MCF 10A (cell line): ENCODE measurements at regions of chr9 and their contacts with region 1.

Region 1: DNA sequence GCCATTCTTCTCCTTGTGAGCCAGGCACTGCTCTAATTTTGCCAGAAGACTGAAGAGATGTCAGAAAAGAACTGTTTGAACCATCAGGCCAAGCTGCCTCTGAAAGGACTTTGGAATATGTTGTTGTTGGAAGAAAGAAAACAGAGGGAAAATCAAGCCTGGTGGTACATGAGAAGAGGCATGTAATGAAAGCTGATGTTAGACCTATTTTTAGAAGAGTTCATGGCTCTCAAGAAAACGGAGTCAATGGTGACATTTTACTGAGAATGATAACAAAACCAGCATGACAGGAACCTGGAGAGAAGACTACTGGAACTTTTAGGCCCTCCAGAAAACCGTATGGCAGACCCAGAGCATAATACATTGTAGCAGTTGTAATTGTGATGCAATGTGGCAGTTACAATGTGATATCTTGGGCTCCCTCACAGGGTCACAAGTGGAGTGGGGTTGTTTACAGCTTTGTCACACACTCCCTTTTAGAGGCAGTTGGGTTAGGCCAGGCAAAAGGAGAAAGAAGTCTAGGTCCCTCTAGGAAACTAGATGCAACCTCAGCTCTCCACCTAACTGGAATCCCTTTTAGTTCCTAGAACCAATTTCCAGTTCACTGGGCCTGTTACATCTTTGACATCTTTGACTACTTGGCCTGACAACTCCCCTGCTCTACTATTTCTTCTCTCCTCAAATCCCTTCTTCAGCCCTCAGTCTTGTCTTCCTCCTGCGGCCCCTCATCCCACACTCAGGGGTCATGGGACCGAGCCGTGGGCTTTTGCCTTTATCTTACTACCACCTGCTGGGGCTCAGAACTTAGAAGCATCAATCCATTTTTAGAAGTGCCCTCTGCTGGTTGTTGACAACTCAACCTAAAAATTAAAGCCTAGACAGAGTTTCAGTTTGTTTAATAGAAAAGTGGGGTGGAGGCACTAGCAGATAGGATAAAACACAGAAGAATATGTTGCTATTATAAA is 61.2 kb upstream of the JAK2 start:
- DNase-seq: peak; percentile 52
- H3K4me3 Mint-ChIP-seq: no peak overlapping the region
- H3K27ac Mint-ChIP-seq: no peak overlapping the region
- H3K4me1 Mint-ChIP-seq: no peaks in the 10 kb centered on the region
- H3K27me3 Mint-ChIP-seq: peaks cover 11% of the 10 kb centered on the region
- CTCF ChIP-seq: peak; percentile 32

Region 2: GRCh38 chr9:4382722-4383317 is 541.0 kb before region 1 on chr9:
- CTCF ChIA-PET with region 1: no interaction called
- POLR2A ChIA-PET with region 1: no interaction called
- intact Hi-C with region 1: loop called (anchors 5 kb)
- DNase-seq: peak; percentile 53
- H3K4me3 Mint-ChIP-seq: no peak overlapping the region
- H3K27ac Mint-ChIP-seq: no peak overlapping the region
- H3K4me1 Mint-ChIP-seq: no peaks in the 10 kb centered on the region
- H3K27me3 Mint-ChIP-seq: no peaks in the 10 kb centered on the region
- CTCF ChIP-seq: peak; percentile 41

Region 3: DNA sequence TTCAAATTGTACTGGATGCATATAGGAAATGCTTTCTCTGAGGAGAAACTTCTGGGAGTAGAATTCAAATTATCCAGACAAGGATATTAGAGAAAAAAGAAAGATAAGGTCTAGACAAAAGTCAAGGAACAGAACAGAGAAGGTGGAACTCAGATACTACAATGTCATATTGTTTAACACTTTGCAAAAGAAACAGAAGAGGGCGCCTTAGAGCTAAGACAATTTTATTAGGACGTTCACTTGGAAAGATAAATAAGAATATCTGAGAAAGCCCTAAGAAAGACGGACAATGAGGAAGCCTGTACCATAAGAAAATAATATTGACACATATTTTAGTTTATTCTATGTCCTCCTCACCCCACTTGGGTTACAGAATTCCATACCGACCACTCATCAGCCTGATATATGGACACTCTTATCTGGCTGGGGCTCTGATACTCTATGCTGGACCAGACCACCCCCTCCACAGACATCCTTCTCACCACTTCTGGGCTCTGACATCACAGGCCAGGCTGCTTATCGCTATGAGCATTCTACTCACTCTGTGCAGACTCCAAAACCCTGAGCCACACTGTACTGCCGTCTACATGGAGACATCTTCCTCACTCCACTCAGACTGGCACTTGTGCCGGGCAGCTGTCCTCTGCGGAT is 173.7 kb before region 1 on chr9:
- CTCF ChIA-PET with region 1: interaction called, 18 read pairs
- POLR2A ChIA-PET with region 1: no interaction called
- intact Hi-C with region 1: no loop called
- DNase-seq: peak; percentile 64
- H3K4me3 Mint-ChIP-seq: no peak overlapping the region
- H3K27ac Mint-ChIP-seq: no peak overlapping the region
- H3K4me1 Mint-ChIP-seq: peaks cover 7% of the 10 kb centered on the region
- H3K27me3 Mint-ChIP-seq: no peaks in the 10 kb centered on the region
- CTCF ChIP-seq: peak; percentile 38

Region 4: GRCh38 chr9:4849364-4849763 is 74.5 kb before region 1 on chr9:
- CTCF ChIA-PET with region 1: interaction called, 5 read pairs
- POLR2A ChIA-PET with region 1: no interaction called
- intact Hi-C with region 1: loop called (anchors 5 kb)
- DNase-seq: no peak
- H3K4me3 Mint-ChIP-seq: no peak overlapping the region
- H3K27ac Mint-ChIP-seq: no peak overlapping the region
- H3K4me1 Mint-ChIP-seq: peaks cover 18% of the 10 kb centered on the region
- H3K27me3 Mint-ChIP-seq: no peaks in the 10 kb centered on the region
- CTCF ChIP-seq: no peak

Region 5: DNA sequence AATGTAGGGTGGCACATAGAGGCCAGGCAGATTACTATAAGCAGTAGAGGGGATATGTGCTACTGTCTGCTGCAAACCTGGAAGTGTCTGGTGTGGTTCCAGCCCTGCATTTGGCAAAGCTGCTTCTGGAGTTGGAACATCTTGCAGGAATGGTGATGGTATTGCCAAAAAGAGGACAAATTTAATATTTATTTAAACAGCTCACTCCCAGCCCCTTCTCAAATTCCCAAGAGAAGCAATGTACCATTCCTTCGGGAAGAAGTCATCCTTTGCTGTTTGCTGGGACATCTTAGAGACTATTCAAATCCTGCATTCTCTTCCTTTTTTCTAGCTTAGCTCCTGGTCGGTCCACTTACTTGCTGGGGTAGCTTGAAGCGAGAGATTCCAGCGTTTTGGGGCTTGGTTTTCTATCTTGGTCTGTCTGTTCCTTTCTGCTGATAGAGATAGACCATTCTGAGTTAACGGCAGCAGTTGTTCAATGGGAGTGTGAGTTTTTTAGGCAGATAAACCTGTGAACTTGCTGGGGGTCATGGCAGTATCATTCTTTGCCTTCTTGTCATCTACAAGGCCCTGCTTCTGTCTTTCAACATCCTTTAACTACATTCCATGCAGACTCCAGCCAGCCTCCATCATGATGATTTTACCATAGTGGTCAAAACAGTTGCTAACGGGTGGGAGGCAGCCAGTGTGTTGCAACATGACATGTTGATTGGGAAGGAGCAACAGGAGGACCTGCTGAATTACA is 61.2 kb before region 1 on chr9:
- CTCF ChIA-PET with region 1: interaction called, 12 read pairs
- POLR2A ChIA-PET with region 1: no interaction called
- intact Hi-C with region 1: loop called (anchors 5 kb)
- DNase-seq: no peak
- H3K4me3 Mint-ChIP-seq: no peak overlapping the region
- H3K27ac Mint-ChIP-seq: no peak overlapping the region
- H3K4me1 Mint-ChIP-seq: peaks cover 34% of the 10 kb centered on the region
- H3K27me3 Mint-ChIP-seq: no peaks in the 10 kb centered on the region
- CTCF ChIP-seq: no peak

Region 6: DNA sequence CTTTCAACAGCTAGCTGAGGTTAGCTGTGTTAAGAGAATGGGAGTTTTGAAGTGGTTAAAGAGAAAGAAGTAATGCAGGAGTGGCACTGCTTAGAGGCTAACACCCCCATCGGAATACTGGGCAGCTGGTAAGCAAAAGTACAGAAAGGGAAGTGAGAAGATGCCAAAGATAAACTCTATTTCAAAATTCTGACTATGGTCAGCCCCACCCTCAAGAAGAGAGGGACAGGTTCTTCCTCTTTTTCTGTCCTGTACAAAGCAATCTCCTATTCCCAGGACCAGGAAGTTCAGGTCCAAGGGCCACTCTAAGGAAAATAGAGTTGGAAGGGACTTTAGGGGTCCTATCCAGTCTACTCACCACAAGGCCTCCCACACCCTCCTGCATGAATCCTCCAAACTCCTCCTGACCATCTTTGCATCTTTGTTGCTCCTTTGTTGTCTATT is 15.3 kb after region 1 on chr9:
- CTCF ChIA-PET with region 1: interaction called, 14 read pairs
- POLR2A ChIA-PET with region 1: no interaction called
- intact Hi-C with region 1: no loop called
- DNase-seq: no peak
- H3K4me3 Mint-ChIP-seq: no peak overlapping the region
- H3K27ac Mint-ChIP-seq: no peak overlapping the region
- H3K4me1 Mint-ChIP-seq: no peaks in the 10 kb centered on the region
- H3K27me3 Mint-ChIP-seq: no peaks in the 10 kb centered on the region
- CTCF ChIP-seq: no peak